ENCODE measurements at regions of chr14 and their contacts with region 1.

Region 1: DNA sequence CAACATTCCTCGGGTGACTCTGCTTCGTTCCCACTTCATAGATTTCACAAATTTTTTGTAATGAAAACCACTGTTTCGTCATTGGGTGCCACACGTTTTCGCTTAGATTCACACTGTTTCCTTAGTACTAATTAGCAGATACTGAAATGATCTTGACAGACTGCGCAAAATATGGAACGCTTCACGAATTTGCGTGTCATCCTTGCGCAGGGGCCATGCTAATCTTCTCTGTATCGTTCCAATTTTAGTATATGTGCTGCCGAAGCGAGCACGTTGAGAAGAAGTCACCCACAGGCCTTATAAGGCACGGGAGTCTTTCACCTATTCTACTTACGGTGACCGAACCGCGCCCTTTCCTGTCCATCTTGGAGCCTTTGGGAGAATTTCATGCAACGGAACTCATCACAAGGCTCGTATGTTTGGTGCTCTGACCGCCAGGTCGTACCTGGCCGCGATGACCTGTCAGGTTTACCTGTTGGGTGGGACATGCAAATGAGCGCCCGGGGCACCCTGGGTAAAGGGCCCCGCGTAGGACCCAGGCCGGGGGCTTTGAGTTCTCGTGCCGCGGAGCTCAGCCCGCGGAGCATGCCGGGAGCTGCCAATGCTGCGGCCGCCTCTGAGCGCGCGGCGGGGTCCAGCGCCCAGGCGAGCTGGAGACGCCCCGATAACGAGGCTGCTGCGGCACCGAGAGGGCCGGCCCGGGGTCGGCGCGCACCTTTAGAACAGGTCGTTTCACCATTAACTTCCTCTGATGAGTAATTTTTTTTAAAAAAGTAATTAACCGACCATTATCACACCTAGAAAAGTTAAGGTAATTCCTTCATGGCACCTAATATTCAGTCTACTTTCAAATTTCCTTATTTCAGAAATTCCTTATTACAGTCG is at the start of gene RNU6-8:
- DNase-seq: peak; percentile 84
- ATAC-seq: peak; percentile 78
- H3K4me3 Mint-ChIP-seq: peak within 1 kb of the TSS; percentile 87
- H3K27ac Mint-ChIP-seq: peak within 1 kb of the TSS; percentile 100
- H3K4me1 Mint-ChIP-seq: peaks cover 51% of the 10 kb centered on the region
- H3K27me3 Mint-ChIP-seq: no peaks in the 10 kb centered on the region
- CTCF ChIP-seq: no peak
- total RNA-seq, gene RNU6-8: not detected in 2 replicates

Region 2: DNA sequence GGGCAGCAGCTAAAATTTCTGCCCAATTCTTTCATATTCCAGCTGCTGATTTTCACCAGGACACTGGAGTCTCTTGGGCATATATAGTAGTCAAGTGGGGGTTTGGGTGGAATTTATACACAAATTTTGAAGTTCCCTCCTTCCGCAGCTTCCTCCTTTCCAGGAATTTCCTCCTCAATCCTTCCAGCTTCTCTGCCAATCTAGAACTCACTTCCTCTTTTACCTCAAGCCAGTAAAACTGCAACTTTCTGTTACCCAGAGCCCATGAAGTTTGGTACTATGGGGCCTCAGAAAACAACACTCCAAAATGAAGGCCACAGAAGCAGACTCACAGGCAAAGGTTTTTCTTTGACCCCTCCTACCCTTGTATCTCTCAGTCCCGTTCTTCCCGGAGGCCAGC is 1696.0 kb before region 1 on chr14:
- CTCF ChIA-PET with region 1: no interaction called
- POLR2A ChIA-PET with region 1: no interaction called
- intact Hi-C with region 1: no loop called
- DNase-seq: no peak
- ATAC-seq: no peak
- H3K4me3 Mint-ChIP-seq: no peak overlapping the region
- H3K27ac Mint-ChIP-seq: no peak overlapping the region
- H3K4me1 Mint-ChIP-seq: no peaks in the 10 kb centered on the region
- H3K27me3 Mint-ChIP-seq: peaks cover 26% of the 10 kb centered on the region
- CTCF ChIP-seq: no peak

Region 3: GRCh38 chr14:30558675-30559555 is 1644.3 kb before region 1 on chr14 and contains the start of gene G2E3:
- CTCF ChIA-PET with region 1: no interaction called
- POLR2A ChIA-PET with region 1: no interaction called
- intact Hi-C with region 1: loop called (anchors 2 kb)
- DNase-seq: peak; percentile 88
- ATAC-seq: peak; percentile 99
- H3K4me3 Mint-ChIP-seq: peak within 1 kb of the TSS; percentile 100
- H3K27ac Mint-ChIP-seq: peak within 1 kb of the TSS; percentile 98
- H3K4me1 Mint-ChIP-seq: peaks cover 29% of the 10 kb centered on the region
- H3K27me3 Mint-ChIP-seq: no peaks in the 10 kb centered on the region
- CTCF ChIP-seq: no peak
- total RNA-seq, gene G2E3: 23.5 and 32.6 TPM in 2 replicates

Region 4: GRCh38 chr14:31420319-31421111 is 782.7 kb before region 1 on chr14 and contains the start of gene HEATR5A:
- CTCF ChIA-PET with region 1: no interaction called
- POLR2A ChIA-PET with region 1: interaction called, 3 read pairs
- intact Hi-C with region 1: loop called (anchors 1 kb)
- DNase-seq: peak; percentile 95
- ATAC-seq: peak; percentile 97
- H3K4me3 Mint-ChIP-seq: peak within 1 kb of the TSS; percentile 96
- H3K27ac Mint-ChIP-seq: peak within 1 kb of the TSS; percentile 90
- H3K4me1 Mint-ChIP-seq: peaks cover 22% of the 10 kb centered on the region
- H3K27me3 Mint-ChIP-seq: no peaks in the 10 kb centered on the region
- CTCF ChIP-seq: no peak
- total RNA-seq, gene HEATR5A: 11.1 and 13.2 TPM in 2 replicates

Region 5: DNA sequence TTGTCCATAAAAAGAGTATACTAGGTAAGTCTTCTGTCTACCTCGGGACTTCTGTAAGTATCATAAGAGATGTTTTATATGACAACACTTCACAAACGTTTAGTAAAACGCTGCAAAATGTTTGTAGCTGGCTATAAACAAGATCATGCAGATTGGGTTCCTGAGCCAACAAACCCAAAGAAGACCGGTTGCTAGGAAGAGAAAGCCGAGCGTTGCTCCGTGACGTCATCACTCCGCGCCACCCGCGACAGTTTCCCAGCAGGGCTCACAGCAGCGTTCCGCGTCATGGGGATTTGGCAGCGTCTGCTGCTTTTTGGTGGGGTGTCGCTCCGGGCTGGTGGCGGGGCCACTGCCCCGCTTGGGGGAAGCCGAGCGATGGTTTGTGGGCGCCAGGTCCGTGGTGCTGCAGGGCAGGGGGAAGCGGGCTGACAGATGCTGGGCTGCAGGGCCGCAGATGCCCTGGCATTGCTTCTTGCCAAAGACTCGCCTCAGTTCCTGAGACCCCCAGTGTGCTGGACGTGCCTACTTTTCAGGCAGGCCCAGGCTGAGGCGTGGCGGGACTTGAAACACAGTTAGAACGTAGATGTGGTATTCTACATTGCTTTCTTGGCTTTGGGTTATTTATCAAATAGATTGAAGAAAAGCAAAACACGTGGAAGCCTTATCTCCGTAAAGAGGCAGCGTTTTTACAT is 641.9 kb before region 1 on chr14 and contains the start of gene NUBPL:
- CTCF ChIA-PET with region 1: no interaction called
- POLR2A ChIA-PET with region 1: interaction called, 3 read pairs
- intact Hi-C with region 1: loop called (anchors 1 kb)
- DNase-seq: peak; percentile 97
- ATAC-seq: peak; percentile 92
- H3K4me3 Mint-ChIP-seq: peak within 1 kb of the TSS; percentile 97
- H3K27ac Mint-ChIP-seq: peak within 1 kb of the TSS; percentile 97
- H3K4me1 Mint-ChIP-seq: peaks cover 24% of the 10 kb centered on the region
- H3K27me3 Mint-ChIP-seq: peaks cover 6% of the 10 kb centered on the region
- CTCF ChIP-seq: no peak
- total RNA-seq, gene NUBPL: 11.7 and 11.9 TPM in 2 replicates

Region 6: DNA sequence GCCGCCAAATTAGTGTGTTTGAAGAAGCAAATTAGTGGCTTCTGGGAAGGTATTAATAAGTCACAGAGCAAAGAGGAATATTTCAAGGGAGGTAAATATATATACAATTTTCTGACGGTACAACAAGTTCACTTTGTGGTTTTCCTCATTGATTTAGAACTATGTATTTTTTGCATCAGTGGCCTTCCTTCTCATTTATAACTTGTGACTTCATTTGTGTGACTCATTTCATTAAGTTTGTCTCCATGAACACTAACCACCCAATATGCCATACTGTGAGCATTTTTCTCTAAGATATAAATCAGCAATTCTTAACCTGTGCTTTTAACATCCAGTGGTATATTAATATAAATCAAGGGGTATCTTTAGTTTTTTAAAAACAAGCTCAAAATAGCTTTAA is 155.4 kb before region 1 on chr14:
- CTCF ChIA-PET with region 1: no interaction called
- POLR2A ChIA-PET with region 1: no interaction called
- intact Hi-C with region 1: loop called (anchors 1 kb)
- DNase-seq: no peak
- ATAC-seq: no peak
- H3K4me3 Mint-ChIP-seq: no peak overlapping the region
- H3K27ac Mint-ChIP-seq: no peak overlapping the region
- H3K4me1 Mint-ChIP-seq: peaks cover 36% of the 10 kb centered on the region
- H3K27me3 Mint-ChIP-seq: peaks cover 5% of the 10 kb centered on the region
- CTCF ChIP-seq: no peak

Region 7: DNA sequence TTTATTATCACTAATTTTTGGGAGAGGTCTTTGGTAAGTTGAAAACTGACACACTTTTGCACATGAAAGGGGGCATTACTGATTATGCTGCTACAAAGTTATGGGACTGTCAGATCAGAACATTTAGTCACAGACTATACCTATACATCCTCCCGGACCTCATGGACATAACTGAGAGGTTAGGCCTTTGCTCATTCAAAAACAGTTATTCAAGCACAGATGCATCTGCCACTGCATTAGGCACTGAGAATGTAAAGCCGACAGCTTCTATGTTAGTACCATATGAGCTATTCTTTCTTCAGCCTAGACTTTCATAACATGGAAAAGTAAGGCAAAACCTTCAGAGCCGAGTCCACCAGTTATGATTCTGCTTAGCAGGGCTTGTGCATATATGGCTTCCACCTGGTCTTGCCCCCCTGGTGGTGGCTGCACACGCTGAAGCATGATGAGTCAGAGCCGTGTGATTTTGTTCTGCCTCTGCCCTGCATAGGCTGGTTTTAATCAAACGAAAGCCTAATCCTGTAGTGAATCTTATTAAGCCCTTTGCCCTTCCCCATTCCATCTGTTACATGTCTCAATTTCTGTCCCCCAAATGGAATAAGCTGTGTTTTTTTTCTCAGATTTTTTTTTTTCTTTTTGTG is 21.6 kb after region 1 on chr14:
- CTCF ChIA-PET with region 1: no interaction called
- POLR2A ChIA-PET with region 1: no interaction called
- intact Hi-C with region 1: loop called (anchors 2 kb)
- DNase-seq: no peak
- ATAC-seq: peak; percentile 84
- H3K4me3 Mint-ChIP-seq: no peak overlapping the region
- H3K27ac Mint-ChIP-seq: no peak overlapping the region
- H3K4me1 Mint-ChIP-seq: peaks cover 3% of the 10 kb centered on the region
- H3K27me3 Mint-ChIP-seq: peaks cover 11% of the 10 kb centered on the region
- CTCF ChIP-seq: no peak

Measured in activated B cell treated with CpG ODN at 0.5 μM for 24 hours (primary cell).